ENCODE measurements at regions of chr5 and their contacts with region 1.

Region 1: DNA sequence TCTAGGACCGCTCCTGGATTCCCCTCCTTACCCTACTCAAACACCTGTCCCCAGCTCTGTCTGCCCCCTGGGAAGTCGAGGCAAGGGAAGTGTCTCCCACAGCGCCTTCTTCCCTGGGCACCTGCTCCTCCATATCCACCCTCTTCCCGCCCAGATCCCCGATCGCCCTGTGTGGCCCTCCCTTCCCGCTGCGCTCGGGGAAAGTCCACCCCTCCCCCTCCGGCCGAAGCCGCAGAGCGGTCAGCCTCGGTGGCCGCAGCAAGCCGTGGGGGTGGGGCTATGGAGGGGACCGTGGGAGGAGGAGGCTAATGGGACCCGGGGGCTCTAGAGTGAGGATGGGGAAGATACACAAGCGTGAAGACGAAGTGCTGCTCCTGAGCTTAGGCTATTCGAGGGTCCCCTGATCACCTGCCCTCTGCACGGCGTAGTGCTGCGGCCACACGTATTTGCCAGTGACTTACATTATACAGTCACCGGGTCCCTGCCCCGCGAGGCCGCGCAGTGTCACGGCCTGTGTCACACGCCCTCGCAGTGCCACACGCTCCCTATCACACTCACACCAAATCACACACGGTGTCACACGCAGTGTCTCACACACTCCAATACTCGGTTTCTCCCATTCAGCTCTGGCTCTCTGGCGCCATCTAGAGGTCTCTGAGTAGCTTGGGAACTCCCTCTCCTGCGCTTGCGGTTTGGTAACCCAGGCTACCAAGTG is 658 bp upstream of the PCDH1 start:
- DNase-seq: peak; percentile 73 to 94 (median 88)
- ATAC-seq: peak; percentile 92
- H3K4me3 ChIP-seq: peak overlapping the region; percentile 44
- H3K4me3 Mint-ChIP-seq: peak overlapping the region; percentile 77 to 91 (median 84)
- H3K27ac ChIP-seq: no peak overlapping the region
- H3K27ac Mint-ChIP-seq: peak overlapping the region in 5 of 9 donors; percentile 0 to 47 (median 11)
- H3K4me1 ChIP-seq: peaks cover 24 to 26% of the 10 kb centered on the region in 2 donors
- H3K4me1 Mint-ChIP-seq: peaks cover 20 to 33% (median 28%) of the 10 kb centered on the region in 7 donors
- H3K27me3 ChIP-seq: peaks cover 8 to 32% of the 10 kb centered on the region in 2 donors
- H3K27me3 Mint-ChIP-seq: peaks cover 66 to 88% (median 75%) of the 10 kb centered on the region in 5 donors

Region 2: GRCh38 chr5:140882591-140882899 is 996.3 kb before region 1 on chr5:
- CTCF ChIA-PET with region 1: no interaction called
- POLR2A ChIA-PET with region 1: no interaction called
- intact Hi-C with region 1: no loop called
- DNase-seq: no peak
- ATAC-seq: no peak
- H3K4me3 ChIP-seq: no peak overlapping the region
- H3K4me3 Mint-ChIP-seq: no peak overlapping the region
- H3K27ac ChIP-seq: no peak overlapping the region
- H3K27ac Mint-ChIP-seq: peak overlapping the region in 1 of 9 donors; percentile 46
- H3K4me1 ChIP-seq: no peaks in the 10 kb centered on the region
- H3K4me1 Mint-ChIP-seq: no peaks in the 10 kb centered on the region
- H3K27me3 ChIP-seq: no peaks in the 10 kb centered on the region
- H3K27me3 Mint-ChIP-seq: peaks cover 0 to 56% (median 53%) of the 10 kb centered on the region in 5 donors

Region 3: GRCh38 chr5:141208478-141208877 is 670.4 kb before region 1 on chr5 and contains the start of gene PCDHB12:
- CTCF ChIA-PET with region 1: no interaction called
- POLR2A ChIA-PET with region 1: no interaction called
- intact Hi-C with region 1: no loop called
- DNase-seq: no peak
- ATAC-seq: no peak
- H3K4me3 ChIP-seq: no peak within 1 kb of the TSS
- H3K4me3 Mint-ChIP-seq: peak within 1 kb of the TSS in 1 of 10 donors; percentile 25
- H3K27ac ChIP-seq: no peak within 1 kb of the TSS
- H3K27ac Mint-ChIP-seq: no peak within 1 kb of the TSS
- H3K4me1 ChIP-seq: no peaks in the 10 kb centered on the region
- H3K4me1 Mint-ChIP-seq: no peaks in the 10 kb centered on the region
- H3K27me3 ChIP-seq: no peaks in the 10 kb centered on the region
- H3K27me3 Mint-ChIP-seq: peaks cover 7 to 84% (median 78%) of the 10 kb centered on the region in 5 donors
- total RNA-seq, gene PCDHB12: not detected

Region 4: GRCh38 chr5:141605523-141606277 is 273.2 kb before region 1 on chr5:
- CTCF ChIA-PET with region 1: no interaction called
- POLR2A ChIA-PET with region 1: no interaction called
- intact Hi-C with region 1: loop called in 1 of 2 experiments (anchors 5 kb)
- DNase-seq: peak in 8 of 9 donors; percentile 60 to 90 (median 88)
- ATAC-seq: peak; percentile 95
- H3K4me3 ChIP-seq: peak overlapping the region; percentile 37
- H3K4me3 Mint-ChIP-seq: peak overlapping the region; percentile 13 to 88 (median 80)
- H3K27ac ChIP-seq: peak overlapping the region; percentile 72
- H3K27ac Mint-ChIP-seq: peak overlapping the region; percentile 83 to 96 (median 89)
- H3K4me1 ChIP-seq: peaks cover 86 to 87% of the 10 kb centered on the region in 2 donors
- H3K4me1 Mint-ChIP-seq: peaks cover 60 to 97% (median 90%) of the 10 kb centered on the region in 7 donors
- H3K27me3 ChIP-seq: no peaks in the 10 kb centered on the region
- H3K27me3 Mint-ChIP-seq: no peaks in the 10 kb centered on the region

Region 5: GRCh38 chr5:141691867-141692532 is 186.9 kb before region 1 on chr5:
- CTCF ChIA-PET with region 1: interaction called, 109 read pairs
- POLR2A ChIA-PET with region 1: interaction called, 19 read pairs
- intact Hi-C with region 1: loop called (anchors 1 kb)
- DNase-seq: peak; percentile 59 to 91 (median 78)
- ATAC-seq: peak; percentile 94
- H3K4me3 ChIP-seq: peak overlapping the region; percentile 48
- H3K4me3 Mint-ChIP-seq: peak overlapping the region in 9 of 10 donors; percentile 52 to 83 (median 69)
- H3K27ac ChIP-seq: no peak overlapping the region
- H3K27ac Mint-ChIP-seq: peak overlapping the region in 4 of 9 donors; percentile 2 to 60 (median 48)
- H3K4me1 ChIP-seq: peaks cover 12 to 16% of the 10 kb centered on the region in 2 donors
- H3K4me1 Mint-ChIP-seq: peaks cover 13 to 28% (median 16%) of the 10 kb centered on the region in 7 donors
- H3K27me3 ChIP-seq: no peaks in the 10 kb centered on the region
- H3K27me3 Mint-ChIP-seq: peaks cover 0 to 27% (median 11%) of the 10 kb centered on the region in 5 donors

Region 6: DNA sequence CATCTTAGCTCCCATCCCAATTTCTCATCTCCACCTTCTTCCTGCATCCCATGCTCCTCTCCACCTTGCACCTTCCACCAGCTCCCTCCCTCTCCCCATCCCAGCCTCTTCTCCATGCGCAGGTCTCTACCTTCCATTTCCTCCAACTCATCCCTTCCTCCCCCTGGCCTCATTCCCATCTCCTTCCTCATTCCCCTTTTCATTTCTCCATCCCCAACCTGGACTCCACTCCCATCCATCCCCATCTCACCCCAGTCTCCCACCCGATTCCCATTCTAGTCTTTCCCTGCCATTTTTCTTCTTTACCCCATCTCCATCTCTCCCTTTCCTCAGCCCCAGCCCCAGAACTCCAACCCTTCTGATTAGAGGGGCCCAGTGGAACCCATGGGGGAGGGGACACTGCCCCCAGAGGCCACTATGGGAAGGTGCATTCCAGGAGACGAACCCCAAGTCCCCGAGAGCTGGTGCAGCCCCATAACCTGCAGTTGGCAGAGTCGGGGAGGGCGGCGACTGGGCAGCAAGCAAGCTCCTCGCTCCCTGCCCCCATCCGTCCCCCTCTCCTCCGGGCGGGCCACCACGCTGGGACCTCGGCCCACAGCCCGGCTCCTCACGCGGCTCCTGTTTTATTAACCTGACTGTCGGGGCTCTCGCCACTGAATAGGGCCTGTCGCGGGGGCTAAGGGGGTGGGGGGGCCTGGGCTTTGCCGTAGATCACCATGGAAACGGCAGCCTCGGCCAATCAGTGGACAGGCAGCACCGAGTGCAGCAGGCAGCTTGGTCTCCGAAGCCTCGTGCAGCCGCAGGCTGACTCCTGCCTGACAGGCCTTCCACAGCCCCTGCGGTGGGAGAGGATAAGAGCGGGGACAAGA is 67.3 kb before region 1 on chr5:
- CTCF ChIA-PET with region 1: interaction called, 5 read pairs
- POLR2A ChIA-PET with region 1: no interaction called
- intact Hi-C with region 1: loop called in 1 of 2 experiments (anchors 1 kb)
- DNase-seq: peak in 5 of 9 donors; percentile 7 to 23 (median 18)
- ATAC-seq: peak; percentile 71
- H3K4me3 ChIP-seq: no peak overlapping the region
- H3K4me3 Mint-ChIP-seq: peak overlapping the region in 1 of 10 donors; percentile 25
- H3K27ac ChIP-seq: no peak overlapping the region
- H3K27ac Mint-ChIP-seq: no peak overlapping the region
- H3K4me1 ChIP-seq: no peaks in the 10 kb centered on the region
- H3K4me1 Mint-ChIP-seq: peaks cover 0 to 8% (median 0%) of the 10 kb centered on the region in 7 donors
- H3K27me3 ChIP-seq: no peaks in the 10 kb centered on the region
- H3K27me3 Mint-ChIP-seq: peaks cover 46 to 64% (median 49%) of the 10 kb centered on the region in 5 donors

Region 7: DNA sequence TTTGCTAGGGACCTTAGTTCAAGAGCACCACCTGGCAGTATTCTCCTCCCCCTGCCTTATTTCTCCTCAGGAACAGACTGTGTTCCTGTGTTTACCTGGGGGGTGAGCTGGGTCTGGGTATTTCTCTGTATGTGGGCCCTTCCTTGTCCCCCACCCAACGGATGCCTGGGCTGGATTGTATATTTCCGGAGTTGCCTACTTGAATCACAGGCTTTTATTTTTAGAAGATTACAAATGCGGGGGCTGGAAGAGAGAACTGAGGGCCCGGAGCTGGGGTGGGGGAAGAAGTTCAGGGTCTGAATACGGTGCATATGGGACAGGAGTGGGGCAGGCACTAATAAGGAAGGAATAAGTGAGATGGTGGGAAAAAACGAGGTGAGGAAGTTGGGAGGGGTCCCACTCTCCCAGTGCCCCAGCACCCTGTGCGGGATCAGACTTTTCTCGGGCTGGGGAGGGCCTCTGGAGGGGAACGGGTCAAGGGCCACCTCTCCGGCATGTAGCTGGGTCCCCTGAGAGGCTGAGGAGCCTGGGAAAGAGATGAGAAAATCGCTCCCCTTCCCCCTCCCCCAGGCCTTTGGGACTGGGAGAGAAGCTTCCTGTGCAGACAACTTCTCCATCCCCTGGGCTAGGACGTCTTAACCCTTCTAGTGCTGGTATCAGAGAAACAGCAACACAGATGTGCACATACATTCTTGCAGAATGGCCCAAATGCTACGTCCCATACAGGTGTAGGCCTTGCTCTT is 42.8 kb before region 1 on chr5:
- CTCF ChIA-PET with region 1: no interaction called
- POLR2A ChIA-PET with region 1: no interaction called
- intact Hi-C with region 1: no loop called
- DNase-seq: no peak
- ATAC-seq: no peak
- H3K4me3 ChIP-seq: no peak overlapping the region
- H3K4me3 Mint-ChIP-seq: peak overlapping the region in 7 of 10 donors; percentile 2 to 67 (median 48)
- H3K27ac ChIP-seq: no peak overlapping the region
- H3K27ac Mint-ChIP-seq: peak overlapping the region in 1 of 9 donors; percentile 20
- H3K4me1 ChIP-seq: peaks cover 0 to 12% of the 10 kb centered on the region in 2 donors
- H3K4me1 Mint-ChIP-seq: peaks cover 9 to 21% (median 17%) of the 10 kb centered on the region in 7 donors
- H3K27me3 ChIP-seq: no peaks in the 10 kb centered on the region
- H3K27me3 Mint-ChIP-seq: peaks cover 0 to 13% (median 1%) of the 10 kb centered on the region in 5 donors

Region 8: GRCh38 chr5:141889282-141889871 is 10.5 kb after region 1 on chr5:
- CTCF ChIA-PET with region 1: interaction called, 14 read pairs
- POLR2A ChIA-PET with region 1: interaction called, 3 read pairs
- intact Hi-C with region 1: no loop called
- DNase-seq: no peak
- ATAC-seq: no peak
- H3K4me3 ChIP-seq: no peak overlapping the region
- H3K4me3 Mint-ChIP-seq: no peak overlapping the region
- H3K27ac ChIP-seq: no peak overlapping the region
- H3K27ac Mint-ChIP-seq: peak overlapping the region in 1 of 9 donors; percentile 0
- H3K4me1 ChIP-seq: no peaks in the 10 kb centered on the region
- H3K4me1 Mint-ChIP-seq: peaks cover 0 to 3% (median 0%) of the 10 kb centered on the region in 7 donors
- H3K27me3 ChIP-seq: peaks cover 0 to 8% of the 10 kb centered on the region in 2 donors
- H3K27me3 Mint-ChIP-seq: peaks cover 15 to 46% (median 34%) of the 10 kb centered on the region in 5 donors

Region 9: GRCh38 chr5:142145106-142145900 is 266.4 kb after region 1 on chr5:
- CTCF ChIA-PET with region 1: no interaction called
- POLR2A ChIA-PET with region 1: no interaction called
- intact Hi-C with region 1: loop called in 1 of 2 experiments (anchors 10 kb)
- DNase-seq: peak in 8 of 9 donors; percentile 38 to 67 (median 58)
- ATAC-seq: peak; percentile 89
- H3K4me3 ChIP-seq: no peak overlapping the region
- H3K4me3 Mint-ChIP-seq: no peak overlapping the region
- H3K27ac ChIP-seq: no peak overlapping the region
- H3K27ac Mint-ChIP-seq: no peak overlapping the region
- H3K4me1 ChIP-seq: no peaks in the 10 kb centered on the region
- H3K4me1 Mint-ChIP-seq: peaks cover 0 to 17% (median 5%) of the 10 kb centered on the region in 7 donors
- H3K27me3 ChIP-seq: no peaks in the 10 kb centered on the region
- H3K27me3 Mint-ChIP-seq: no peaks in the 10 kb centered on the region